ENCODE measurements at regions of chrX and their contacts with region 1.

Region 1: GRCh38 chrX:2325076-2325784 is 175.5 kb downstream of the DHRSX start:
- DNase-seq: peak; percentile 19 to 79
- ATAC-seq: no peak
- H3K4me3 ChIP-seq: peak overlapping the region in 3 of 4 donors; percentile 44 to 58 (median 46)
- H3K27ac ChIP-seq: peak overlapping the region; percentile 51 to 93 (median 91)
- H3K4me1 ChIP-seq: peaks cover 0 to 14% of the 10 kb centered on the region in 2 donors
- H3K27me3 ChIP-seq: no peaks in the 10 kb centered on the region
- CTCF ChIP-seq: no peak
- POLR2A ChIP-seq: no peak

Region 2: GRCh38 chrX:1391707-1392375 is 933.4 kb before region 1 on chrX and contains the start of gene SLC25A6:
- in situ Hi-C with region 1: no loop called
- intact Hi-C with region 1: loop called (anchors 2 kb)
- DNase-seq: peak; percentile 98 to 99
- ATAC-seq: peak; percentile 82 to 88
- H3K4me3 ChIP-seq: peak within 1 kb of the TSS; percentile 86 to 100 (median 98)
- H3K27ac ChIP-seq: peak within 1 kb of the TSS; percentile 98 to 100 (median 98)
- H3K4me1 ChIP-seq: peaks cover 38 to 57% of the 10 kb centered on the region in 2 donors
- H3K27me3 ChIP-seq: no peaks in the 10 kb centered on the region
- CTCF ChIP-seq: peak in 3 of 5 experiments; percentile 27 to 48 (median 32)
- POLR2A ChIP-seq: peak; percentile 95 to 98
- total RNA-seq, gene SLC25A6: 60.0 to 69.9 (median 65.1) TPM

Region 3: GRCh38 chrX:2342874-2343273 is 17.6 kb after region 1 on chrX:
- in situ Hi-C with region 1: no loop called
- intact Hi-C with region 1: loop called (anchors 1 kb)
- DNase-seq: peak in 1 of 2 donors; percentile 5
- ATAC-seq: no peak
- H3K4me3 ChIP-seq: no peak overlapping the region
- H3K27ac ChIP-seq: peak overlapping the region; percentile 82 to 92 (median 88)
- H3K4me1 ChIP-seq: peaks cover 14 to 16% of the 10 kb centered on the region in 2 donors
- H3K27me3 ChIP-seq: no peaks in the 10 kb centered on the region
- CTCF ChIP-seq: no peak
- POLR2A ChIP-seq: no peak

Region 4: GRCh38 chrX:2401590-2402360 is 76.5 kb after region 1 on chrX:
- in situ Hi-C with region 1: no loop called
- intact Hi-C with region 1: loop called (anchors 2 kb)
- DNase-seq: peak; percentile 90 to 93
- ATAC-seq: peak; percentile 87 to 93
- H3K4me3 ChIP-seq: peak overlapping the region in 3 of 4 donors; percentile 22 to 31 (median 28)
- H3K27ac ChIP-seq: peak overlapping the region; percentile 81 to 92 (median 88)
- H3K4me1 ChIP-seq: peaks cover 10 to 27% of the 10 kb centered on the region in 2 donors
- H3K27me3 ChIP-seq: no peaks in the 10 kb centered on the region
- CTCF ChIP-seq: no peak
- POLR2A ChIP-seq: peak in 1 of 2 donors; percentile 56

Region 5: GRCh38 chrX:2608638-2609430 is 283.6 kb after region 1 on chrX:
- in situ Hi-C with region 1: loop called in 1 of 4 experiments (anchors 25 kb)
- intact Hi-C with region 1: no loop called
- DNase-seq: peak; percentile 69 to 78
- ATAC-seq: peak; percentile 85 to 91
- H3K4me3 ChIP-seq: peak overlapping the region; percentile 70 to 97 (median 77)
- H3K27ac ChIP-seq: peak overlapping the region; percentile 74 to 84 (median 80)
- H3K4me1 ChIP-seq: peaks cover 5 to 7% of the 10 kb centered on the region in 2 donors
- H3K27me3 ChIP-seq: no peaks in the 10 kb centered on the region
- CTCF ChIP-seq: no peak
- POLR2A ChIP-seq: peak; percentile 28 to 34

Measured in gastrocnemius medialis (tissue), 4 donors.